Lower leg skin (tissue), 4 donors: ENCODE measurements at regions of chr11 and their contacts with region 1.

Region 1: DNA sequence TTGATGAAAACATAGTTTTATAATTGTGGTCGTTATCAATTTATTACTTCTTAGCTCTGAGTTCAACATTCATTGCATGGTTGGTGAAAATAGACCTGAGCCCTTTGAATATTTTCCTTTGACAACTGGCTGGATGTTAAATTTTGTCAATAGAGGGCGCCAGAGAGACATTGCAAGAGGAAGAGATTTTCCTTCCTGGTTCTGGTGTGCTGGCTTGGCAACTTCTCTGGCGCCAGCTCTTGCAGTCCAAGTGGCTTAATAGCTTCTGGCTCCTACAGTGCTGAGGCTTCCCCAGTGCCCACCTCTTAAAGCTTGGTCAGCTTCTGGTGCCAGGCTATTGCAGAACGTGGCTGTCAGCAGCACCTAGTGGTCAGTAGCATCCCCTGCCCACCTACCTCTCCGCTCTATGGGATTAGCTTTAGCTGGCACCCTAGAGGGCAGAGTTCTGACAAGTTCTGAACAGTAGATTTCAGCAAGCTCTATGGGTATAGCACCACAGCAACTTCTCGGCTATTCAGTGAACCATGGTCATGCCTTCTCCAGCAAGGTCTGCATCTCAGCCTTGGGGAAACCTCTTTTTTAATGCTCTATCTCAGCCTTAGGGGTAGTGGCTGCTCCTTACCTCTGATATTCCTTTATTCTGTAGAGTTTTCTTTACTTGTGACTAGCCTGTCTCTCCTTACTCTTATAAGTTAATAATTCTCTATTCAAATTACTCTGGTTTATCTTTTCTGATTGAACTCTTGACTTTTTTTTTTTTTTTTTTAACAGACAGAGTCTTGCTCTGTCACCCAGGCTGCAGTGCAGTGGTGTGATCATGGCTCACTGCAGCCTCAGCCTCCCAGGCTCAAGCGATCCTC is 59.4 kb downstream of the ACER3 start:
- DNase-seq: peak; percentile 84 to 91
- H3K4me3 ChIP-seq: no peak overlapping the region
- CTCF ChIP-seq: peak in 1 of 3 donors; percentile 31
- POLR2A ChIP-seq: no peak

Region 2: GRCh38 chr11:76734456-76735420 is 185.4 kb before region 1 on chr11:
- intact Hi-C with region 1: loop called (anchors 5 kb)
- DNase-seq: no peak
- H3K4me3 ChIP-seq: no peak overlapping the region
- CTCF ChIP-seq: no peak
- POLR2A ChIP-seq: no peak

Region 3: DNA sequence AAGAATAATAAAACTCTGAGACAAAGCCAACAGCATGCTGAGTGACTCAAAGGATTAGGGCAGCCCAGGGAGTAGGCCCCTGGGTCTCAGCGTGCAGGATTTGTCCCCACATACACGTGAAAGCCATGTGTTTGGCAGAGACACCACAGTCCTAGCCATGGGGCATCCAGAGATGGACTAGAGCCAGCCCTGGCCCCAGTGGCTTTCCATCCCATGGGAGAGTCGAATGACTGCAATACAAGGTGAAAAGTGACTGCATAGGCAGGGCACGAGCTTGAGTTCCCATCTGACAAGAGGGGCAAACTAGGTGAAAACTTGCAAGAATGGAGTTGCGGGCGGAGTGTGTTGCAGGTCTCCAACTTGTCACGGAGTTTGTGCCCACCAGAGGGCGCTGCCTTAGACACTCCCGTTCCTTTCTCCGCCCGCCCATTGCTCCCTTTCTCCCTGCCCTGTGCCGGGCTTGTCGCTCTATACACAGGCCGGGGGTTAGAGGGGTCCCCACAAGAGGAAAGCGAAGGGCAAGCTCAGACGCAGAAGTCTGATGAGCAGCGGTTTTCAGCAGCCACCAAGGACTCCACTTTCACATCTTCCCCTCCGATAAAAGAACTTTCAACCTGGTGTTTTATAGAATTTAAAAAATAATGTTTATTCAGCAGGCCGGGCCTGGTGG is 112.8 kb before region 1 on chr11:
- intact Hi-C with region 1: loop called (anchors 5 kb)
- DNase-seq: peak; percentile 88 to 98
- H3K4me3 ChIP-seq: no peak overlapping the region
- CTCF ChIP-seq: peak in 1 of 3 donors; percentile 72
- POLR2A ChIP-seq: no peak

Region 4: DNA sequence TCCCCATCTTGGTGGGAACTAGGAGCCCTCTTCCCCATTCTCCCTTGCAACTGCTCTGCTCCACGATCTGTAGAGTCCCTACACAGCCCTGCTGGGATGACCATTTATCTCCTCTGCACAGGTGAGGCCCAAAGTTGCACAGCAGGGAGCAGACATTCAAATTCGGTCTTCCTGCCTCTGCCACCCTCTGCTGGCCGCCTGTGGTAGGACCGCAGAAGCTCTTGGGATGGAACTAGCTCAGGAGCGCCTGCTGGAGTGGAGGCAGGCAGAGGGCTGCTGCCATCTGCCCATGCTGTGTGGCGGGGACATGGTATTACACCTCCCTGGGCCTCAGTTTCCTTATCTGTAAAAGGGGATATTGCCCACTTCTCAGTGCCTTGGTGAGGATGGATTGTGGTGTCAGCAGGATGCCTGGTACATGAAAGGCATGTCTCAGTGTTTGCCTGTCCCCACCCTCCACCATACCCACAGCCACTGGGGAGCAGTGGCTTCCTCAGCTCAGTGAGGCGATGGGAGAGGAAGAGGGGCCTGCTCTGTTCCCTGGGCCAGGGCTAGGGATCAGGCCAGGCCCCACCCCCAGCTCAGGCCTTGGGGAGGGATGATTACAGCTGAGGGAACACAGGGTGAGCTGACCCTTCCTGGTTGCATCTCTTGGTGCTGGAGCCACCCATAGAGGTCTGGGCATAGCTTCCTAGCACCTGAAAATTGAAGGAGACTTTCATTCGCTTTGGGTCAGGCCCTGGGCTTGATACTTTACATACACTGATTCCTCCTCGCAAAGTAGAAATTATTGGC is 171.2 kb after region 1 on chr11:
- intact Hi-C with region 1: loop called (anchors 5 kb)
- DNase-seq: peak; percentile 78 to 96
- H3K4me3 ChIP-seq: no peak overlapping the region
- CTCF ChIP-seq: peak in 1 of 3 donors; percentile 88
- POLR2A ChIP-seq: no peak